Activated CD4-positive, alpha-beta T cell treated with anti-CD3 and anti-CD28 coated beads for 36 hours (primary cell): ENCODE measurements at regions of chr2 and their contacts with region 1.

Region 1: GRCh38 chr2:131413148-131413747 is 49.3 kb upstream of the RAB6D start:
- DNase-seq: peak; percentile 24
- ATAC-seq: peak; percentile 66
- H3K4me3 Mint-ChIP-seq: no peak overlapping the region
- H3K27ac Mint-ChIP-seq: no peak overlapping the region
- H3K4me1 Mint-ChIP-seq: no peaks in the 10 kb centered on the region
- H3K27me3 Mint-ChIP-seq: peaks cover 26% of the 10 kb centered on the region

Region 2: GRCh38 chr2:131154071-131154531 is 259.1 kb before region 1 on chr2:
- CTCF ChIA-PET with region 1: interaction called, 6 read pairs
- POLR2A ChIA-PET with region 1: no interaction called
- intact Hi-C with region 1: loop called (anchors 1 to 5 kb)
- DNase-seq: peak; percentile 93
- ATAC-seq: peak; percentile 99
- H3K4me3 Mint-ChIP-seq: no peak overlapping the region
- H3K27ac Mint-ChIP-seq: peak overlapping the region; percentile 1
- H3K4me1 Mint-ChIP-seq: peaks cover 31% of the 10 kb centered on the region
- H3K27me3 Mint-ChIP-seq: no peaks in the 10 kb centered on the region

Region 3: DNA sequence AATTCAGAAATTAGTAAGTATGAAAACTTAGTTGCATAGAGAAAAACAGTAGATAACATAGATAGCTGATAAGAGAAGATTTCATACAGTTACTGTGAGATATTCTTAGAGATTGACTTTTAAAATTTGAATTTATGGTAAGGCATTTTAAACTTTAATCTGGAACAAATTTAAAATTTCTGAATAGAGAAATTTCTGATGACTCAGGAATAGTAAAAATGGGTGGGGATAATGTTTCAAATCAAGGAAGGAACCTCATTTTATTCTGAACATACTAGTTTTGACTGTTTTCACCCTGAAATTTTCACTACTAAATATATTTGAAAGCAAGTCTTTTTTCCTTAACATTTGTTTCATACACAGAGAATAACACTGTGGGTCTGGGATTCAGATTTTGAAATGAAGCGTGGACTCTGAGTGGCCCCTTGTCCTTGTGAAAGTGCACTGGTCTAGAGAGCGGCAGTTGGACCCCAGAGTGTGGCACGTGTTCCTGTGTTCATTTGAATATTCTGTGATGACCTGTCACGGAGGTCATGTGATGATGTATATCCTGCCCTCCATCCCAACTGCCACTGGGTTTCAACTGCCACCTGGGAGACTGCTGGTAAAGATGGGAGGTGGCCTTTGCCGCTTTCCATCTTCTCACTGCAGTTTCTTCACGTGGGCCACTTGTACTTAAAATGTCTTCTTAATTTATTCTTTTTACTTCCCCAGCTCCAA is 10.8 kb before region 1 on chr2:
- CTCF ChIA-PET with region 1: interaction called, 17 read pairs
- POLR2A ChIA-PET with region 1: no interaction called
- intact Hi-C with region 1: no loop called
- DNase-seq: no peak
- ATAC-seq: no peak
- H3K4me3 Mint-ChIP-seq: no peak overlapping the region
- H3K27ac Mint-ChIP-seq: no peak overlapping the region
- H3K4me1 Mint-ChIP-seq: no peaks in the 10 kb centered on the region
- H3K27me3 Mint-ChIP-seq: peaks cover 12% of the 10 kb centered on the region

Region 4: DNA sequence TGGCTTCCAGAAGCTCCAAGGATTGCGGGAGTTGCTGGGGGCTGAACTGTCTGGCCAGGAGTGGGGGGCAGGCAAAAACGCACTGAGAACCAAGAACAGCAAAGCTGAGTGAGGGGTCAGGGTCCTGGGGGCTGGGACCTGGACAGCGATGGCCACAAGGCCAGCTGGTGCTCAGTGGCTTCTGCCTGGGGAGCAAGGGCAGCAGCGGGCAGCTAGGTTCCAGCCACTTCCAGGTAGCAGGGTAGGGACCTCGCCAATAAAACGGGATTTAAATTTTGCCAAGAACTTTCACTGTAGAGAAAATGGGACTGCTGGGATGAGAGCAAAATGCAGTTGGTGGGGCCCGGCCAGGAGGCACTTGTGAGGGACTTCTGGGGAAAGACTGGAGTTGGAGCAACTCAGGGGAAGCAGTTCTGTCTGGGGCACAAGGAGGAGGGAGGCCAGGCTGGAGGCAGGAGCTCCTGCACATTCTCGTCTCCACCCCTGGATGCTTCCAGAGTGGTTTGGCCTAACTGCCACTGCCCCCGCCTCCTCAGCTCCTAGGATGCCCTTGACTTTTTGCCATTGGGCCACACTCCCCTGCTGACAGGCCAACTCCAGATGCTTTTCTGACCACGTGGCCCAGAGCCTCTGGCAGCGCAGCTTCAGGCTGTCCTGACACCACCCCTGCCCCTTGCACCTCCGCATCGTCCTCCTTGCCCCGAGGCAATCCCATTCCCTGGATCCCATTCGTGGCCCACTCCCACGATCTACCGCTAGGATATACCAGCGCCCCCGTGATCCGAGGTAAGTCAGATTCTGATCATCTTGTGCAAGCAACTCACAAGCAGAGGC is 108.9 kb after region 1 on chr2:
- CTCF ChIA-PET with region 1: no interaction called
- POLR2A ChIA-PET with region 1: no interaction called
- intact Hi-C with region 1: loop called in 1 of 2 experiments (anchors 5 kb)
- DNase-seq: no peak
- ATAC-seq: no peak
- H3K4me3 Mint-ChIP-seq: no peak overlapping the region
- H3K27ac Mint-ChIP-seq: no peak overlapping the region
- H3K4me1 Mint-ChIP-seq: no peaks in the 10 kb centered on the region
- H3K27me3 Mint-ChIP-seq: no peaks in the 10 kb centered on the region

Region 5: DNA sequence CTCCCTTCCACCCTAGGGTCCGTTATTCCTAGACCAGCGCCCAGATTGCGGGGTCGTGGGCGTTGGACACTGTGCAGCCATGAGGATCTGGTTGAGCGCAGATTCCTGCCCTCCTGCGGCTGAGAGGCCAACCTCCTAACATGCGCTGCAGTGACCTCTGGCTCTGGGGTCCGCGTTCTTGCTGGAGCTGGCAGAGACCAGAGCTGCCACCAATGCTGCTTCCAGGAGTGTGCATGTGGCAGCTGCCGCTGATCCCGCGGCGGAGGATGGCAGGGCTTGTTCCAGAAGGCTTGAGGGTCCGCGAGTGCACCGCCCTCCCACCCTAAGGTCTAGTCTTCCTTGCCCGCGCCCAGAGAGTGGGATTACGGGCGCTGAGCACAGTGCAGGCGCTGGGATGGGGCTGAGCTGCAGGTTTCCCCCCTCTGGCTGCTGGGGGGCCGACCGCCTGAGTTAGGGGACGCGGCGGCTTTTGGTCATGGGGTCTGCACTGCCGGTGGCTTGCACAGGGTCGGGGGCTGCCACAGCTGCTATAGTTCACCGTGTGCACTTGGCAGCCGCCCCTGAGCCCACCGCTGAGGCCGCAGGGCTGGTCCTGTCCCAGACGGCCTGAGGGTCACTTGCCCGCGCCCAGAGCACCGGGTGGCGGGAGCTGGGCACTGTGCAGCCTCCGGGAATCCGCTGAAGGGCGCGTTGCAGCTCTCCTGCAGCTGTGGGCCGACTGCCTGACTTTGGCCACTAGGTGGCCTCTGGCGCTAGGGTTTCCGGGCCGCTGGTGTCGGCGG is 260.3 kb after region 1 on chr2:
- CTCF ChIA-PET with region 1: interaction called, 19 read pairs
- POLR2A ChIA-PET with region 1: no interaction called
- intact Hi-C with region 1: loop called (anchors 1 kb)
- DNase-seq: peak; percentile 78
- ATAC-seq: peak; percentile 74
- H3K4me3 Mint-ChIP-seq: peak overlapping the region; percentile 19
- H3K27ac Mint-ChIP-seq: no peak overlapping the region
- H3K4me1 Mint-ChIP-seq: peaks cover 2% of the 10 kb centered on the region
- H3K27me3 Mint-ChIP-seq: peaks cover 24% of the 10 kb centered on the region

Region 6: DNA sequence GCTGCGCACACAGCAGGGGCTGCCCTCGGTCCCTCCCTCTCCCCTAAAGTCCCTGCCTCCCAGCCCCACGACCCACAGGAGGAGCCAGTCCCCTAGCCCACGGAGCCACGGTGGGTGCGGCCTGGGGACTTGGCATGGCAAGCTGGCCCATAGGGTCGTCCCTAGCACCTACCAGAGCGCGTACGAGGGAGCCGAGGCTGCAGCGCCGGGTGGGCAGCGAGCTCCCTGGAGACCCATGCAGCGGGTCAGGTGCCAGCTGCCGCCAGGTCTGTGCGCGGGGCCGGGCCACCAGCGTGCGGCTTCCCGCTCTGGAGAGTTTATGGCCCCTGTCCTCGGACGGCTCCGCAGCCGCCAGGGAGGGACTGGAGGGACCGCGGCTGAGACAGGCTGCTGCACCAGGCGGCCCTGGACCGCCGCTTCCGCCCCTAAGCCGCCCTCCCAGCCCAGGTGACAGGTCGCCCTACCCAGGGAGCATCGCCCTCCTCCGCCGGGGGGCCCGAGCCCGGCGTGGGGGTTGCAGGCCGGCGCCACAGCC is 388.0 kb after region 1 on chr2:
- CTCF ChIA-PET with region 1: interaction called, 4 read pairs
- POLR2A ChIA-PET with region 1: no interaction called
- intact Hi-C with region 1: loop called in 1 of 2 experiments (anchors 2 kb)
- DNase-seq: no peak
- ATAC-seq: no peak
- H3K4me3 Mint-ChIP-seq: no peak overlapping the region
- H3K27ac Mint-ChIP-seq: no peak overlapping the region
- H3K4me1 Mint-ChIP-seq: no peaks in the 10 kb centered on the region
- H3K27me3 Mint-ChIP-seq: peaks cover 8% of the 10 kb centered on the region